MCF 10A (cell line): ENCODE measurements at regions of chr6 and their contacts with region 1.

Region 1: DNA sequence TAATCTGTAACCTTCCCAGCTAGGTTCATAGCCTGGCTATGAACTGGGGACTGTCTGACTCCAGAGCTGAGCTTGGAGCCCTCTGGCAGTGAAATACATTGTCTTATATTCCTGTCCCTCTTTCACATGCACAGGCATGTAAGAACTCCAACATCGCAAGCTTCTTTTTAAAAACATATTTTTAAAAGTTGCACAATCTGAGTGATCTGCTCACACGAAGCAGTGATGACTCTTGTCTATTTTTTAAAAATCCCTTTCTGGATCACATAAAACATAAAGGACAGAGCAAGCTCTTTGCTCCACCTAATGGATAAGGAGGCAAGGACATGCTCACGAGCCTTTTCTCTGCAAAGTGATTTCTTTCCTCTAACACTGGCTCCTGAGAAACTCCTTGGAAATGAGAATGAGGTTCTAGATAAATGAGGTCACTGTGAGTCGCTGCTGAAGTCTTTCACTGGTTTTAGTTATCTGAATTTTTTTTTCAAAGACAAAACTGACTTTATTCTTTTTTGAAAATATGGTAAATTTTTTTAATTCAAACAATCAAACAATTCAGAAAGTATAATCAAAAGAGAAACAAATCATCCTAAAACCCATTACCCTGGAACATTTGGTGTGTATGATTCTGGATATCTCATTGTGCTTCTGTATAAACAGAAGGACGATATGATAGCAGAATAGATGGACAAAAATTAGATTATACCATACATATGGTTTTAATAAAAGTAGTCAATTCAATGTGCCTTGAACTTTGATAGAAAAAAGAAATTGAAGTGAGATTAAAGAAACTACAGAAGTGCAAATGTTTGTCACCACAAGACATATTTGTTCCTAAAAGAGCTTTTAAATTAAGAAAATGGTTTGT is 30.8 kb downstream of the IL20RA start:
- DNase-seq: peak; percentile 81
- H3K4me3 Mint-ChIP-seq: no peak overlapping the region
- H3K27ac Mint-ChIP-seq: peak overlapping the region; percentile 17
- H3K4me1 Mint-ChIP-seq: peaks cover 14% of the 10 kb centered on the region
- H3K27me3 Mint-ChIP-seq: no peaks in the 10 kb centered on the region
- CTCF ChIP-seq: peak; percentile 67

Region 2: GRCh38 chr6:136582711-136583471 is 431.1 kb before region 1 on chr6:
- CTCF ChIA-PET with region 1: interaction called, 5 read pairs
- POLR2A ChIA-PET with region 1: no interaction called
- intact Hi-C with region 1: loop called (anchors 2 kb)
- DNase-seq: peak; percentile 76
- H3K4me3 Mint-ChIP-seq: no peak overlapping the region
- H3K27ac Mint-ChIP-seq: peak overlapping the region; percentile 96
- H3K4me1 Mint-ChIP-seq: peaks cover 23% of the 10 kb centered on the region
- H3K27me3 Mint-ChIP-seq: no peaks in the 10 kb centered on the region
- CTCF ChIP-seq: peak; percentile 47

Region 3: DNA sequence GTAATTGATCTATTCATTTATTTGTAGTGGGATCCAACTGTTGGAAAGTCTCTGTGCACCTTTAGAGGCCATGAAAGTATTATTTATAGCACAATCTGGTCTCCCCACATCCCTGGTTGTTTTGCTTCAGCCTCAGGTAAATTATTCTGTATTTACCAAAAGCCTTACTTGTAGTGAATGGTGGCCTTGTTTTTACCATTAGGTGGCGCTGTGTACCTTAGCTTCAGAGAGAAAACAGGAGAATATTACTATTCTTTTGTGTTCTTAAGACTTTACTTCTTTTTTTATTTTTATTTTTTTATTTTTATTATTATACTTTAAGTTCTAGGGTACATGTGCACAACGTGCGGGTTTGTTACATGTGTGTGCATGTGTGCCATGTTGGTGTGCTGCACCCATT is 167.9 kb before region 1 on chr6:
- CTCF ChIA-PET with region 1: interaction called, 13 read pairs
- POLR2A ChIA-PET with region 1: interaction called, 13 read pairs
- intact Hi-C with region 1: loop called (anchors 2 kb)
- DNase-seq: peak; percentile 63
- H3K4me3 Mint-ChIP-seq: no peak overlapping the region
- H3K27ac Mint-ChIP-seq: no peak overlapping the region
- H3K4me1 Mint-ChIP-seq: peaks cover 9% of the 10 kb centered on the region
- H3K27me3 Mint-ChIP-seq: no peaks in the 10 kb centered on the region
- CTCF ChIP-seq: peak; percentile 53

Region 4: DNA sequence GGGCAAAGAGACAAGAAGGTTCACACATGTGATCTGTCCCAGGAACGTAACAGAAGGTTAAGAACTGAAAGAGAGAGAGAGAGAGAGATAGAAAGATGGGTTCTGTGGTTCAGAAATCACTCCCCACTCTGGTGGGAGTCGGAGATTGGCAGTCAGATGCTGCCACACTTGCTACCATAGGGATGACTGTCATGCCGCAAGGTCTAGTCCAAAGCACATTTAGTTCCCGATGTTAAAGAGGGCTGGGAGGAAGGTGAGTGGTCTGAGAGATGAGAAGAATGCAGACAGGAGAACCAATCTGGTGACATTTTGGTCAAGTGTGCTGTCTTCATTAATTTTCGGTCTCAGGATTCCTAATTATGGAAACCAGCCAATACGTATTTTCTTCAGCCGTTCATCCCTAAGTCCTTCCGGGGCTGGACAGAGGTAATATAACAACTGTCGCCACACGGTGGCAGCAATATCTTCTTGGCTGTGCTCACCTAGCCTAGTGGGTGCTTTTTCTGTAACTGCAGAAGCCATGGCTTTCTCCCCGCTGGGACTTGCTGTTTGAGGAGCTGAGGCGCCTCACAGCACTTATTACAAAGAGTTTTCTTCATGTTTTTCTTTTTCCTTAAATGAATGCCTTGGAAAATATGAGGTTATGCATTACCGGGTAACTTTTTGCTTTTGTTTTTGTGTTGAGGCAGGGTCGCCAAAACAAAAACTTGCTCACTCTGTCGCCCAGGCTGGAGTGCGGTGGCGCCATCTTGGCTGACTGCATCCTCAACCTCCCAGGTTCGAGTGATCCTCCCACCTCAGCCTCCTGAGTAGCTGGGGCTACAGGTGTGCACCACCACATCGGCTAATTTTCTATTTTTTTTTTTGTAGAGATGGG is 45.9 kb before region 1 on chr6:
- CTCF ChIA-PET with region 1: interaction called, 57 read pairs
- POLR2A ChIA-PET with region 1: interaction called, 55 read pairs
- intact Hi-C with region 1: loop called (anchors 1 kb)
- DNase-seq: peak; percentile 85
- H3K4me3 Mint-ChIP-seq: no peak overlapping the region
- H3K27ac Mint-ChIP-seq: no peak overlapping the region
- H3K4me1 Mint-ChIP-seq: peaks cover 5% of the 10 kb centered on the region
- H3K27me3 Mint-ChIP-seq: no peaks in the 10 kb centered on the region
- CTCF ChIP-seq: peak; percentile 51

Region 5: GRCh38 chr6:137025786-137026456 is 12.0 kb after region 1 on chr6:
- CTCF ChIA-PET with region 1: interaction called, 24 read pairs
- POLR2A ChIA-PET with region 1: interaction called, 7 read pairs
- intact Hi-C with region 1: no loop called
- DNase-seq: no peak
- H3K4me3 Mint-ChIP-seq: no peak overlapping the region
- H3K27ac Mint-ChIP-seq: peak overlapping the region; percentile 74
- H3K4me1 Mint-ChIP-seq: peaks cover 25% of the 10 kb centered on the region
- H3K27me3 Mint-ChIP-seq: no peaks in the 10 kb centered on the region
- CTCF ChIP-seq: no peak

Region 6: DNA sequence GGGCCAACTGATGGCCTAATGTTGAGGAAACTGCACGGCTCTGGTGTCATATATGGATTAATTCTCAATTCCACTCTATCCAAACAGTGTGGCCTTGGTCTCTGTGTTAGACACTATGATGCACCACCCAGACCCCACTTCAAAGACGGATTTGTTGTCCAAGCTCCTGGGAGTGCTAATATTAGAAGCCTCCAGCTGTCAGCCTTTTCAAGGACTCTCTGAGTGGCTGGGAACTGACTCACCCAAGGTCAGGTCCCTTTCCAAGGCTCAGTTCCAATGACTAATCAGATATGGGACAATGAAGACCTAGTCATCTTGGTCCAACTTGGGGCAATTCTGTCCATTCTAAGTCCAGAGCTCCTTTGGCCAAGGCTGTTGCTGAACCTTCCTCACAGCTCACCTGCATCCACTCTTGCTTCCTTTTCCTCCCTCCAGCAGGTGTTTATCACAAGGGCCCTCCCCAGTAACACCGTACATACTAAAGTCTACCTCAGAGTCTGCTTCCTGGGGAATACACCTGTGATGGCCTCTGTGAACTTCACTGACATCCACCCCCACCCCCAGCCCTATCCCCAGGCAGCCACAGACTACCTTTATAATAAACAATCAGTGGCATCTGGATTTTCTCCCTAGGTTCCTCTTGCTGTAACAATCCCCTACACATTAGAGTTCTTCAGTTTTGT is 38.0 kb after region 1 on chr6:
- CTCF ChIA-PET with region 1: no interaction called
- POLR2A ChIA-PET with region 1: no interaction called
- intact Hi-C with region 1: no loop called
- DNase-seq: no peak
- H3K4me3 Mint-ChIP-seq: no peak overlapping the region
- H3K27ac Mint-ChIP-seq: no peak overlapping the region
- H3K4me1 Mint-ChIP-seq: no peaks in the 10 kb centered on the region
- H3K27me3 Mint-ChIP-seq: no peaks in the 10 kb centered on the region
- CTCF ChIP-seq: no peak

Region 7: GRCh38 chr6:137070303-137070702 is 56.3 kb after region 1 on chr6:
- CTCF ChIA-PET with region 1: no interaction called
- POLR2A ChIA-PET with region 1: no interaction called
- intact Hi-C with region 1: no loop called
- DNase-seq: no peak
- H3K4me3 Mint-ChIP-seq: no peak overlapping the region
- H3K27ac Mint-ChIP-seq: no peak overlapping the region
- H3K4me1 Mint-ChIP-seq: no peaks in the 10 kb centered on the region
- H3K27me3 Mint-ChIP-seq: no peaks in the 10 kb centered on the region
- CTCF ChIP-seq: no peak